IMR-90 (cell line): ENCODE measurements at regions of chr20 and their contacts with region 1.

Region 1: GRCh38 chr20:45771182-45771759 is 20.4 kb downstream of the WFDC3 start:
- DNase-seq: peak; percentile 80
- ATAC-seq: peak; percentile 93
- H3K4me3 ChIP-seq: no peak overlapping the region
- H3K27ac ChIP-seq: peak overlapping the region; percentile 69; the same call in 1 of the 2 replicates
- H3K4me1 ChIP-seq: peaks cover 7% of the 10 kb centered on the region
- H3K27me3 ChIP-seq: peaks cover 21% of the 10 kb centered on the region
- CTCF ChIP-seq: peak; percentile 97
- POLR2A ChIP-seq: no peak
- RAD21 ChIP-seq: peak; percentile 91

Region 2: GRCh38 chr20:44692932-44693476 is 1078.3 kb before region 1 on chr20:
- CTCF ChIA-PET with region 1: no interaction called
- POLR2A ChIA-PET with region 1: no interaction called
- dilution Hi-C with region 1: no loop called
- in situ Hi-C with region 1: no loop called
- intact Hi-C with region 1: loop called (anchors 10 kb)
- DNase-seq: peak; percentile 93
- ATAC-seq: peak; percentile 90
- H3K4me3 ChIP-seq: no peak overlapping the region
- H3K27ac ChIP-seq: peak overlapping the region; percentile 66
- H3K4me1 ChIP-seq: peaks cover 29% of the 10 kb centered on the region
- H3K27me3 ChIP-seq: peaks cover 2% of the 10 kb centered on the region; the same call in 1 of the 2 replicates
- CTCF ChIP-seq: no peak
- POLR2A ChIP-seq: no peak
- RAD21 ChIP-seq: no peak

Region 3: DNA sequence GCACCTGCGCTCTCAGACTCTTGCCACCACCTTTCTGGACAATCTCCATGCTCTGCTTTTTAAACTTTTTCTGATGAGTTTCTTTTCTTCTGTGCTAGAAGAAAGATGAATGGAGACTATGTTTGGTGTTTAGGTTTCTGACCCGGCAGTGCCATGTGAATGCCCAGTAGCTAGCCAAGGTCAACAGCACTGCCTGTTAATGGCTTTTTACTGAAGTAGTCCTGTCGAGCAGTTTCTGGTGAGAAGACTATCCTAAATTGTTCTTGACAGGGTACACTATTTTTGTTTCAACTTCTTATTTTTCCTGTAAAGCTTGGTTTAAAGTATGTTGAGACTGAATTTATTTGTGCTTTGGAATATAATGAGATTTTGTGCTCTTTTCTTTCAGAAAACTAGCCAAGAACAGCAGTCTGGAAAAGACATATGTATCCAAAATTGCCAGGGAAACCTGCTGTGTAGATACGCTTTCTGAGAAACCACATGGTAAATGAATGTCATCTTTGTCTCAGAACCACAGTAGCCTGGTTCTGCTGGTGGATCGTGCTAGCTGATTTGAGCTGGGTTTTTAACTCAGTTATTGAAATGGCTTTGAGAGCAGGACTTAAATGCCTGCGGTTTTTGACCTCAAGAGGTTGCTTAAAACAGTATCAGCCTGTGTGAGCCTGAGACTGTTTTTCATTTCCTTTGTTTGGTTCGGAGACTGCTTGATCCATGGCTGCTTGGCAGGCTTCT is 718.4 kb before region 1 on chr20:
- CTCF ChIA-PET with region 1: no interaction called
- POLR2A ChIA-PET with region 1: no interaction called
- dilution Hi-C with region 1: no loop called
- in situ Hi-C with region 1: loop called (anchors 25 kb)
- intact Hi-C with region 1: loop called (anchors 5 kb)
- DNase-seq: peak; percentile 81
- ATAC-seq: peak; percentile 92
- H3K4me3 ChIP-seq: no peak overlapping the region
- H3K27ac ChIP-seq: peak overlapping the region; percentile 44; the same call in 1 of the 2 replicates
- H3K4me1 ChIP-seq: peaks cover 14% of the 10 kb centered on the region
- H3K27me3 ChIP-seq: no peaks in the 10 kb centered on the region
- CTCF ChIP-seq: no peak
- POLR2A ChIP-seq: no peak
- RAD21 ChIP-seq: no peak

Region 4: DNA sequence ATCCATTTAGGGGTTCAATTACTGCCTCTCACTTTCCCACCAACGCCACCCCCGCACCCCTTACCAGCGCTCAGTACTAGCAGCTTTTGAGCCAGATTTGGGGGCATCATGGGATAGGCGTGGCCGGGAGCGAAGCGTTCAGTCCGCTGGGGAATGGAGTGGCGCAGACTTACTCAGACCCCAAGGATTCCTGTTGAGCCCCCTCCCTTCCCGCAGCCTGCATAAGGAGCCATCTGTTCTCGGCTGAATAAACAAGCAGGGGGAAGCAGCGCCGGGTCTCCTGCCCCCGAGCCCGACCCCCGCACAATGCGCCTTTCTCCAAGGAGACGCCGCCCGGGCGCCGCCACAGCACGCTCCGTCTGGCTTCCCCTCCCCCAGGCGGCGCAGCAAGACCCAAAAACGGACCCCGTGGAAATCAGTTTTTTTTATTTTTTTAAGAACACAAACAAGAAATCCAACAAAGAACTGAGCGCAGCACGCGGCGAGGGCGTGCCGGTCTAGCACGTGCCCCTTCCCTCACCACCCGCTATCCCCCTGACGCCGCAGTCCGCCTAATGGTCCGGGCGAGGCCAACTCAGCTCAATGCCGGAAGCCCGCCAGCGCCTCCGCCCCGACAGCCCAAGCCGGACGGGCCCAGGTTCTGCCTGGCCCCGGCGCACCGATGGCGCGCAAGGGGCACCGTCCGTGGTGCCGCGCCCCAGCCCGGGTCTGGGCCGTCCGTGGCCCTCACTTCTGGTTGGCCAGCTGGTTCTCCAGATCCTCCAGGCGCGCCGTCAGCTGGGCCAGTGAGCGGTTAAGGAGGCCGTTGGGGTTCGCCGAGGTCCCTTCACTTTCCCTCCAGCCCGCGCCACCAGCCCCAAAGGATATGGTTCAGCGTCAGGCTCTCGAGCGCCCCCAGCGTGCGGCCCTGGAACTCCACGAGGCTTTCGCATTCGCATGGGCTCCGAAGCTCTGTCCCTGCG is 477.9 kb before region 1 on chr20:
- CTCF ChIA-PET with region 1: interaction called, 11 read pairs
- POLR2A ChIA-PET with region 1: no interaction called
- dilution Hi-C with region 1: no loop called
- in situ Hi-C with region 1: no loop called
- intact Hi-C with region 1: no loop called
- DNase-seq: peak; percentile 46
- ATAC-seq: peak; percentile 93
- H3K4me3 ChIP-seq: peak overlapping the region; percentile 37
- H3K27ac ChIP-seq: no peak overlapping the region; the same call in 1 of the 2 replicates
- H3K4me1 ChIP-seq: no peaks in the 10 kb centered on the region
- H3K27me3 ChIP-seq: peaks cover 17% of the 10 kb centered on the region
- CTCF ChIP-seq: peak; percentile 83
- POLR2A ChIP-seq: no peak
- RAD21 ChIP-seq: no peak; the same call in 1 of the 2 replicates

Region 5: DNA sequence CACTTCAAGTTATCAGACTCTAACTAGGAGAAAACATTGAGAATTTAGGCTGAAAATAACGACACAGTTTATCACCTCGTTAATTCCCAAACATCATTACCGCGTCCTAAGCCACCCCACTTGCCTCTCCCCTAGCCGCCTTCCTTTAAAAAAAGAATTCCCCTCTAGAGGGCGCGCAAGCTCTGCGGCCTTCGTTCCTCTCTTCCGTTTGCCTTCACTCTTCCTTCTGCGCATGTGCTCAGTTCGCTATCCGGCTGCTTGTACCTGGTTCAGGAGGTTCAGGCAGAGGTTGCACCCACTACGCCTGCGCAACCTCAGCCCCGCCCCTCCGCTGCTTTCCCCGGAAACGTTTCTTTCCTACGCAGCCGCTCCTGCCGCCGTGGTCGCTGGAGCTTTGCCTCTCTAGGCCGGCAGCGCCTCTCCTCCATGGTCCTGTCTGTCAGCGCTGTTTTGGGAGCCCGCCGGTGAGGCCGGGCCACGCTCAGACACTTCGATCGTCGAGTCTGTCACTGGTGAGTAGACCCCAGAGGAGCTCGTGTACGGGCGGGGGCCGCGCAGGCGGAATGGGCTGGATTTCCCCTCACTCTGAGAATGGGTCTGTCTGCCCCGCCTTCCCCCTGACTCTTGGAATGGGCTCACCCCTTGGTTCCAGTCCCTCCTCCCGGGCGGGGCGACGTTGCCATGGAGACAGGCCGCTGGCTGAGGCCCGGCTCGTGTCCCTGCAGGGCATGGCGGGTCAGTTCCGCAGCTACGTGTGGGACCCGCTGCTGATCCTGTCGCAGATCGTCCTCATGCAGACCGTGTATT is 408.3 kb before region 1 on chr20 and contains the start of gene SYS1:
- CTCF ChIA-PET with region 1: no interaction called
- POLR2A ChIA-PET with region 1: no interaction called
- dilution Hi-C with region 1: no loop called
- in situ Hi-C with region 1: no loop called
- intact Hi-C with region 1: loop called (anchors 2 kb)
- DNase-seq: peak; percentile 98
- ATAC-seq: peak; percentile 91
- H3K4me3 ChIP-seq: peak within 1 kb of the TSS; percentile 65
- H3K27ac ChIP-seq: peak within 1 kb of the TSS; percentile 94
- H3K4me1 ChIP-seq: peaks cover 17% of the 10 kb centered on the region
- H3K27me3 ChIP-seq: no peaks in the 10 kb centered on the region
- CTCF ChIP-seq: peak; percentile 98
- POLR2A ChIP-seq: peak; percentile 97
- RAD21 ChIP-seq: peak; percentile 84
- total RNA-seq, gene SYS1: 12.9 and 16.7 TPM in 2 replicates

Region 6: GRCh38 chr20:45436732-45437391 is 334.4 kb before region 1 on chr20:
- CTCF ChIA-PET with region 1: interaction called, 9 read pairs
- POLR2A ChIA-PET with region 1: no interaction called
- dilution Hi-C with region 1: no loop called
- in situ Hi-C with region 1: no loop called
- intact Hi-C with region 1: loop called (anchors 10 kb)
- DNase-seq: peak; percentile 81
- ATAC-seq: peak; percentile 100
- H3K4me3 ChIP-seq: peak overlapping the region; percentile 75
- H3K27ac ChIP-seq: peak overlapping the region; percentile 42
- H3K4me1 ChIP-seq: no peaks in the 10 kb centered on the region
- H3K27me3 ChIP-seq: peaks cover 3% of the 10 kb centered on the region
- CTCF ChIP-seq: peak; percentile 91
- POLR2A ChIP-seq: 0 out of 2 replicates have a peak, but pooled peaks have one; percentile 37
- RAD21 ChIP-seq: peak; percentile 91

Region 7: DNA sequence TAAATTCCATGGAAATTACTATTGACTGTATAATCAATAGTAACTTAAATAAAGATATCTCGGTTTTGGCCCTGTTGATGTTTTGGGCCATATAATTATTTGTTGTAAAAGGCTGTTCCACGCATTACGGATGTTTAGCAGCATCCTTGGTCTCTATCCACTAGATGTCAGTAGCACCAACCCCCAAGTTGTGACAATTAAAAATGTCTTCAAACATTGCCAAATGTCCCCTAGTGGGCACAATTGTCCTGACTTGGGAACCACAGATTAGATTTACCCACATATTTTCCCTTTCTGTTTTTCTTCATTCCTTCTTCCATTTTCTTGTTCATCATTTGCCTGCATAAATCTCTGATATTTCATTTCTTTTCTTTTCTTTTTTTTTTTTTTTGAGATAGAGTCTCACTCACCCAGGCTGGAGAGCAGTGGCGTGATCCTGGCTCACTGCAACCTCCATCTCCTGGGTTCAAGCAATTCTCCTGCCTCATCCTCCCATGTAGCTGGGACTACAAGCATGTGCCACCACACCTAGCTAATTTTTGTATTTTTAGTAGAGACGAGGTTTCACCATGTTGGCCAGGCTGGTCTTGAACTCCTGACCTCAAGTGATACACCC is 178.6 kb before region 1 on chr20:
- CTCF ChIA-PET with region 1: interaction called, 3 read pairs
- POLR2A ChIA-PET with region 1: no interaction called
- dilution Hi-C with region 1: no loop called
- in situ Hi-C with region 1: no loop called
- intact Hi-C with region 1: loop called (anchors 1 kb)
- DNase-seq: peak; percentile 21
- ATAC-seq: peak; percentile 29; the same call in 1 of the 2 replicates
- H3K4me3 ChIP-seq: no peak overlapping the region
- H3K27ac ChIP-seq: no peak overlapping the region
- H3K4me1 ChIP-seq: no peaks in the 10 kb centered on the region
- H3K27me3 ChIP-seq: no peaks in the 10 kb centered on the region
- CTCF ChIP-seq: peak; percentile 49
- POLR2A ChIP-seq: no peak
- RAD21 ChIP-seq: peak; percentile 40

Region 8: DNA sequence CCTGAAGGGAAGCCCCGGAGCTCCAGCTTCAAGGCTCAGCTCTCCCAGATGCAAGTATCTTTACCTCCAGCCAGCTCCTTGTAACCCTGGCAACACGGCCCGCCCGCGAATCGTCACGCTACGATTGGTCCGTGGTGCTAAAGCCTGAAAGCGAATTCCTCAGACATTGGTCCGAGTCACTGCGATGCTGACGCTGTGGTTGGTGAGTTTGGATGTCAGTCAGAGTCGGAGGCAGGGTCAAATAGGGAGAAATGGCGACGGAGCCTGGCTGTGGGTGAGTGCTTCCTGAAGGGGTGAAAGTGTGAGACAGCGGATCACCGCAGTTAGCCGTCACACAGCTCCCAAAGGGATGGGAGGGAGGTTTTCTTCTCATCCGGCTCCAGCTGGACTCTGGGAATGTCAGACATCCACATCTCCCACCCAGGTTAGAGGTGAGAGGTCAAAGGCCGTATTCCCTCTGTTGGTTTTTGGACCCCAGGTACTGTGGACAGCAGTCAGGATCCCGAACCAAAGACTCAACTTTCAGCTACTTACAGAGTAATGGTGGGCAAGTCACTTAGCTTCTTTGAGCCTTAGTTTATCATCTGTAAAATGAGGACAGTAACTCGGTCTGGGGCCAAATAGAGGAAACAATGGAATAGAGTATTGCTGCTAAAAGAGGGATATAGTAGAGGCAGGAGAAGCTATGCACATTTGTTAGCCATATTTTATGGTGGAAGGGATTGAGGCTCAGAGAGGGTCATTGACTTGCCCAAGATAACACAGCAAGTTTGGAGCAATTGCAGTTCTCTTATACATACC is 109.9 kb after region 1 on chr20 and contains the start of gene ZSWIM1:
- CTCF ChIA-PET with region 1: no interaction called
- POLR2A ChIA-PET with region 1: no interaction called
- dilution Hi-C with region 1: no loop called
- in situ Hi-C with region 1: no loop called
- intact Hi-C with region 1: no loop called
- DNase-seq: peak; percentile 99
- ATAC-seq: peak; percentile 98
- H3K4me3 ChIP-seq: peak within 1 kb of the TSS; percentile 52
- H3K27ac ChIP-seq: peak within 1 kb of the TSS; percentile 72
- H3K4me1 ChIP-seq: peaks cover 2% of the 10 kb centered on the region; the same call in 1 of the 2 replicates
- H3K27me3 ChIP-seq: no peaks in the 10 kb centered on the region
- CTCF ChIP-seq: no peak
- POLR2A ChIP-seq: peak; percentile 92
- RAD21 ChIP-seq: no peak
- total RNA-seq, gene ZSWIM1: 7.8 and 10.0 TPM in 2 replicates

Region 9: GRCh38 chr20:45972500-45973183 is 201.4 kb after region 1 on chr20:
- CTCF ChIA-PET with region 1: no interaction called
- POLR2A ChIA-PET with region 1: no interaction called
- dilution Hi-C with region 1: no loop called
- in situ Hi-C with region 1: no loop called
- intact Hi-C with region 1: no loop called
- DNase-seq: no peak
- ATAC-seq: no peak
- H3K4me3 ChIP-seq: peak overlapping the region; percentile 67
- H3K27ac ChIP-seq: peak overlapping the region; percentile 72
- H3K4me1 ChIP-seq: peaks cover 13% of the 10 kb centered on the region
- H3K27me3 ChIP-seq: no peaks in the 10 kb centered on the region
- CTCF ChIP-seq: 0 out of 2 replicates have a peak, but pooled peaks have one; percentile 1
- POLR2A ChIP-seq: no peak
- RAD21 ChIP-seq: no peak